H1 (cell line): ENCODE measurements at regions of chr7 and their contacts with region 1.

Region 1: GRCh38 chr7:44123190-44124003 is at the start of gene POLD2:
- DNase-seq: peak; percentile 73 to 96
- H3K4me3 ChIP-seq: peak within 1 kb of the TSS; percentile 74 to 85 (median 76)
- H3K27ac ChIP-seq: peak within 1 kb of the TSS; percentile 70; the same call in 1 of the 2 replicates
- H3K4me1 ChIP-seq: peaks cover 0 to 7% (median 3%) of the 10 kb centered on the region in 4 experiments; a peak in 4 of 7 replicates
- H3K27me3 ChIP-seq: peaks cover 0 to 4% (median under 1%) of the 10 kb centered on the region in 4 experiments; a peak in 4 of 7 replicates
- CTCF ChIP-seq: no peak
- EP300 ChIP-seq: no peak
- POLR2A ChIP-seq: peak in 1 of 2 experiments; percentile 71; a peak in 2 of 3 replicates
- RAD21 ChIP-seq: no peak
- total RNA-seq, gene POLD2: 148 TPM in 2 replicates

Region 2: GRCh38 chr7:44112231-44113000 is 11.0 kb before region 1 on chr7:
- CTCF ChIA-PET with region 1: interaction called, 11 read pairs
- POLR2A ChIA-PET with region 1: interaction called, 50 read pairs
- DNase-seq: no peak
- H3K4me3 ChIP-seq: no peak overlapping the region
- H3K27ac ChIP-seq: no peak overlapping the region
- H3K4me1 ChIP-seq: peaks cover 0 to 2% (median 0%) of the 10 kb centered on the region in 4 experiments; a peak in 1 of 7 replicates
- H3K27me3 ChIP-seq: no peaks in the 10 kb centered on the region
- CTCF ChIP-seq: no peak
- EP300 ChIP-seq: no peak
- POLR2A ChIP-seq: no peak
- RAD21 ChIP-seq: no peak

Region 3: GRCh38 chr7:44145969-44146911 is 22.8 kb after region 1 on chr7:
- CTCF ChIA-PET with region 1: interaction called, 4 read pairs
- POLR2A ChIA-PET with region 1: interaction called, 10 read pairs
- DNase-seq: peak; percentile 76 to 92
- H3K4me3 ChIP-seq: peak overlapping the region; percentile 12 to 68 (median 33); a peak in 7 of 8 replicates
- H3K27ac ChIP-seq: no peak overlapping the region
- H3K4me1 ChIP-seq: peaks cover 0 to 20% (median 8%) of the 10 kb centered on the region in 4 experiments; a peak in 4 of 7 replicates
- H3K27me3 ChIP-seq: peaks cover 13 to 27% (median 22%) of the 10 kb centered on the region in 4 experiments
- CTCF ChIP-seq: no peak
- EP300 ChIP-seq: no peak
- POLR2A ChIP-seq: no peak
- RAD21 ChIP-seq: no peak